Activated CD8-positive, alpha-beta T cell treated with anti-CD3 and anti-CD28 coated beads for 36 hours (primary cell): ENCODE measurements at regions of chr12 and their contacts with region 1.

Region 1: GRCh38 chr12:45670346-45671065 is 59.0 kb upstream of the ARID2 start:
- DNase-seq: peak; percentile 9
- ATAC-seq: peak; percentile 62
- H3K4me3 Mint-ChIP-seq: no peak overlapping the region
- H3K27ac Mint-ChIP-seq: no peak overlapping the region
- H3K4me1 Mint-ChIP-seq: peaks cover 45% of the 10 kb centered on the region
- H3K27me3 Mint-ChIP-seq: no peaks in the 10 kb centered on the region
- CTCF ChIP-seq: no peak

Region 2: DNA sequence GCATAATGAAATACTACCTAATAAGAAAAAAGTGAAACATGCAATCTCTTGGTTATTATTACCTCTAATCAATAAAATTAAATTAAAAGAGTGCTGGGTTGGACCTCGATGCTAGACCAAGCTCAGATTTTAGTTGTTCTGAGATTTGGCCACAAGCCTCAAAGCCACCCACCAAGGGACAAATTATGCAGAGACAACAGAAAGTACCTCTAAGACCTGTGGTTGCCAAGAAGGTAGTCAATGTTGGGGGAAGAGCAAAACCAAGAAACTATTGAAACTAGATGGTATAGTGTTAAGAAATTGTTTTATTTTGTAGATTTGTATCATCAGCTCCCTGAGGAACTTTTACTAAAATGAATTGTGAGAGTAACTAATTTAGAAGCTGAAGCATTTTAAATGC is 15.2 kb after region 1 on chr12:
- CTCF ChIA-PET with region 1: interaction called, 10 read pairs
- POLR2A ChIA-PET with region 1: interaction called, 6 read pairs
- intact Hi-C with region 1: no loop called
- DNase-seq: peak; percentile 32
- ATAC-seq: peak; percentile 49
- H3K4me3 Mint-ChIP-seq: no peak overlapping the region
- H3K27ac Mint-ChIP-seq: no peak overlapping the region
- H3K4me1 Mint-ChIP-seq: peaks cover 24% of the 10 kb centered on the region
- H3K27me3 Mint-ChIP-seq: peaks cover 5% of the 10 kb centered on the region
- CTCF ChIP-seq: no peak

Region 3: GRCh38 chr12:45737638-45738037 is 67.1 kb after region 1 on chr12:
- CTCF ChIA-PET with region 1: no interaction called
- POLR2A ChIA-PET with region 1: no interaction called
- intact Hi-C with region 1: no loop called
- DNase-seq: no peak
- ATAC-seq: no peak
- H3K4me3 Mint-ChIP-seq: no peak overlapping the region
- H3K27ac Mint-ChIP-seq: no peak overlapping the region
- H3K4me1 Mint-ChIP-seq: peaks cover 62% of the 10 kb centered on the region
- H3K27me3 Mint-ChIP-seq: no peaks in the 10 kb centered on the region
- CTCF ChIP-seq: no peak